Caco-2 (cell line): ENCODE measurements at regions of chr11 and their contacts with region 1.

Region 1: GRCh38 chr11:117098269-117099232 is at the start of gene SIK3:
- DNase-seq: peak; percentile 96 to 99
- H3K4me3 ChIP-seq: peak within 1 kb of the TSS; percentile 90
- H3K4me3 Mint-ChIP-seq: peak within 1 kb of the TSS; percentile 77
- H3K27ac Mint-ChIP-seq: peak within 1 kb of the TSS; percentile 99
- H3K4me1 ChIP-seq: peaks cover 46% of the 10 kb centered on the region
- H3K4me1 Mint-ChIP-seq: peaks cover 51% of the 10 kb centered on the region
- H3K27me3 ChIP-seq: no peaks in the 10 kb centered on the region
- H3K27me3 Mint-ChIP-seq: no peaks in the 10 kb centered on the region
- CTCF ChIP-seq: peak; percentile 82 to 92
- total RNA-seq, gene SIK3: 65.7 and 69.4 TPM in 2 replicates

Region 2: DNA sequence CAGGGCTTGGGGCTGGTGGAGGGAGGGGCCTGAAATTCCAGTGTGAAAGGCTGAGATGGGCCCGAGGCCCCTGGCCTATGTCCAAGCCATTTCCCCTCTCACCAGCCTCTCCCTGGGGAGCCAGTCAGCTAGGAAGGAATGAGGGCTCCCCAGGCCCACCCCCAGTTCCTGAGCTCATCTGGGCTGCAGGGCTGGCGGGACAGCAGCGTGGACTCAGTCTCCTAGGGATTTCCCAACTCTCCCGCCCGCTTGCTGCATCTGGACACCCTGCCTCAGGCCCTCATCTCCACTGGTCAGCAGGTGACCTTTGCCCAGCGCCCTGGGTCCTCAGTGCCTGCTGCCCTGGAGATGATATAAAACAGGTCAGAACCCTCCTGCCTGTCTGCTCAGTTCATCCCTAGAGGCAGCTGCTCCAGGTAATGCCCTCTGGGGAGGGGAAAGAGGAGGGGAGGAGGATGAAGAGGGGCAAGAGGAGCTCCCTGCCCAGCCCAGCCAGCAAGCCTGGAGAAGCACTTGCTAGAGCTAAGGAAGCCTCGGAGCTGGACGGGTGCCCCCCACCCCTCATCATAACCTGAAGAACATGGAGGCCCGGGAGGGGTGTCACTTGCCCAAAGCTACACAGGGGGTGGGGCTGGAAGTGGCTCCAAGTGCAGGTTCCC is 268.9 kb before region 1 on chr11 and contains the start of gene APOC3:
- CTCF ChIA-PET with region 1: interaction called, 7 read pairs
- POLR2A ChIA-PET with region 1: interaction called, 3 read pairs
- intact Hi-C with region 1: loop called (anchors 2 kb)
- DNase-seq: peak; percentile 93 to 96
- H3K4me3 ChIP-seq: peak within 1 kb of the TSS; percentile 3; the same call in 1 of the 2 replicates
- H3K4me3 Mint-ChIP-seq: peak within 1 kb of the TSS; percentile 50
- H3K27ac Mint-ChIP-seq: peak within 1 kb of the TSS; percentile 89
- H3K4me1 ChIP-seq: peaks cover 84% of the 10 kb centered on the region
- H3K4me1 Mint-ChIP-seq: peaks cover 49% of the 10 kb centered on the region
- H3K27me3 ChIP-seq: no peaks in the 10 kb centered on the region
- H3K27me3 Mint-ChIP-seq: no peaks in the 10 kb centered on the region
- CTCF ChIP-seq: no peak
- total RNA-seq, gene APOC3: 103 and 128 TPM in 2 replicates

Region 3: GRCh38 chr11:116879800-116880625 is 218.5 kb before region 1 on chr11:
- CTCF ChIA-PET with region 1: interaction called, 8 read pairs
- POLR2A ChIA-PET with region 1: interaction called, 4 read pairs
- intact Hi-C with region 1: loop called (anchors 5 kb)
- DNase-seq: peak in 1 of 2 experiments; percentile 64
- H3K4me3 ChIP-seq: no peak overlapping the region
- H3K4me3 Mint-ChIP-seq: no peak overlapping the region
- H3K27ac Mint-ChIP-seq: no peak overlapping the region
- H3K4me1 ChIP-seq: peaks cover 23% of the 10 kb centered on the region
- H3K4me1 Mint-ChIP-seq: peaks cover 40% of the 10 kb centered on the region
- H3K27me3 ChIP-seq: no peaks in the 10 kb centered on the region
- H3K27me3 Mint-ChIP-seq: no peaks in the 10 kb centered on the region
- CTCF ChIP-seq: peak; percentile 71 to 96

Region 4: GRCh38 chr11:116972691-116973090 is 125.9 kb before region 1 on chr11:
- CTCF ChIA-PET with region 1: interaction called, 9 read pairs
- POLR2A ChIA-PET with region 1: interaction called, 7 read pairs
- intact Hi-C with region 1: loop called (anchors 1 kb)
- DNase-seq: peak in 1 of 2 experiments; percentile 24
- H3K4me3 ChIP-seq: no peak overlapping the region
- H3K4me3 Mint-ChIP-seq: no peak overlapping the region
- H3K27ac Mint-ChIP-seq: peak overlapping the region; percentile 79
- H3K4me1 ChIP-seq: peaks cover 28% of the 10 kb centered on the region
- H3K4me1 Mint-ChIP-seq: peaks cover 29% of the 10 kb centered on the region
- H3K27me3 ChIP-seq: no peaks in the 10 kb centered on the region
- H3K27me3 Mint-ChIP-seq: no peaks in the 10 kb centered on the region
- CTCF ChIP-seq: peak in 1 of 2 experiments; percentile 6

Region 5: DNA sequence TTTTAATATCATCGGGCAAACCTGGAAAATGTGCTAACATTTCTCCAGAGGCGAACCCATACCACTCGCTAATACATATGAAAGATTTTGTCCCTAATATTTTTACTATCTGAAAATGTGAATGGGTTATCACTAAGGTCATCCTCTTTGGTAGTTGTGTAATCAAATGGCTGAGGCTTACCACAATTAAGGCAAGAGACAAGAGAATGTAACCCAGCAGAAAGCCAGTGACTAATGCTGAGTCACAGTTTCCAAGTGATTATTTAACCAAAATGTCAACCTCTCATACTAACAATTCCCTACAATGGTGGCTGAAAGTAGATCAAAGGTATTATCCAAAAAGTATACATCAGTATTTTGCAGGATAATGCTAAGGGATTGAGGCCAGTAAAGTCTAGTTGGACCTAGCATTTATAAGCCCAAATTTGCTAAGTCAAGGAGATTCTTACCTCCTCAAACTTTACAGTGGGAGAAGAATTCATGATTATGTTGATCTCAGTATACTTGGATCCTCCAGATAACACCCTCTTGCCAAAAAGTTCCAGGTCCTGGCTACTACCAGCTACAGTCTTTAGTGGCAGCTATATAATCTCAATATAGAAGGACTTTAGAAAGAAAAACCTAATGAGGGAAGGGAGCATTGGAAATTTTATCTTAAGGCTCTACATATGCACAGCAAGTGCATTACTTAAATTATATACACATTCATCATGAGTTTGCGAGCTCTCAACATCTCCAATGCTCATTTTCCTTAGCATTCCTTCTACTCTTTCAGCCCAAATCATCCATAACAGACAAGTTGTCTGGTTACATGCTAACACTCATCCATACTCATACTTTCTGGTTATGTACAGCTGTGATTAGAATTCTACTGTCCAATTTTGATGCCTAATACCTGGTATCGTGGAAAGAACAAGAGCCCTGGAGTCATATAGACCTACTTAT is 25.8 kb before region 1 on chr11:
- CTCF ChIA-PET with region 1: interaction called, 18 read pairs
- POLR2A ChIA-PET with region 1: interaction called, 23 read pairs
- intact Hi-C with region 1: loop called (anchors 1 kb)
- DNase-seq: peak in 1 of 2 experiments; percentile 78
- H3K4me3 ChIP-seq: no peak overlapping the region
- H3K4me3 Mint-ChIP-seq: no peak overlapping the region
- H3K27ac Mint-ChIP-seq: peak overlapping the region; percentile 28
- H3K4me1 ChIP-seq: peaks cover 68% of the 10 kb centered on the region
- H3K4me1 Mint-ChIP-seq: peaks cover 57% of the 10 kb centered on the region
- H3K27me3 ChIP-seq: no peaks in the 10 kb centered on the region
- H3K27me3 Mint-ChIP-seq: no peaks in the 10 kb centered on the region
- CTCF ChIP-seq: no peak

Region 6: GRCh38 chr11:117143871-117144476 is 45.4 kb after region 1 on chr11 and contains the start of gene PAFAH1B2:
- CTCF ChIA-PET with region 1: interaction called, 7 read pairs
- POLR2A ChIA-PET with region 1: interaction called, 12 read pairs
- intact Hi-C with region 1: no loop called
- DNase-seq: peak; percentile 98 to 99
- H3K4me3 ChIP-seq: peak within 1 kb of the TSS; percentile 89
- H3K4me3 Mint-ChIP-seq: peak within 1 kb of the TSS; percentile 98
- H3K27ac Mint-ChIP-seq: peak within 1 kb of the TSS; percentile 95
- H3K4me1 ChIP-seq: peaks cover 6% of the 10 kb centered on the region; the same call in 1 of the 2 replicates
- H3K4me1 Mint-ChIP-seq: peaks cover 6% of the 10 kb centered on the region
- H3K27me3 ChIP-seq: no peaks in the 10 kb centered on the region
- H3K27me3 Mint-ChIP-seq: no peaks in the 10 kb centered on the region
- CTCF ChIP-seq: no peak
- total RNA-seq, gene PAFAH1B2: 167 and 168 TPM in 2 replicates

Region 7: GRCh38 chr11:117458275-117458674 is 359.7 kb after region 1 on chr11:
- CTCF ChIA-PET with region 1: no interaction called
- POLR2A ChIA-PET with region 1: no interaction called
- intact Hi-C with region 1: no loop called
- DNase-seq: no peak
- H3K4me3 ChIP-seq: no peak overlapping the region
- H3K4me3 Mint-ChIP-seq: no peak overlapping the region
- H3K27ac Mint-ChIP-seq: no peak overlapping the region
- H3K4me1 ChIP-seq: no peaks in the 10 kb centered on the region
- H3K4me1 Mint-ChIP-seq: no peaks in the 10 kb centered on the region
- H3K27me3 ChIP-seq: 0 out of 2 replicates have a peak, but pooled peaks cover 1% of the 10 kb centered on the region
- H3K27me3 Mint-ChIP-seq: peaks cover 15% of the 10 kb centered on the region
- CTCF ChIP-seq: no peak